CD8-positive, alpha-beta T cell (primary cell): ENCODE measurements at regions of chr6 and their contacts with region 1.

Region 1: GRCh38 chr6:89242574-89243330 is 25.6 kb upstream of the GABRR1 start:
- DNase-seq: peak in 2 of 9 experiments; percentile 40 to 53
- ATAC-seq: no peak
- H3K4me3 ChIP-seq: no peak overlapping the region
- H3K4me3 Mint-ChIP-seq: no peak overlapping the region
- H3K27ac ChIP-seq: no peak overlapping the region
- H3K27ac Mint-ChIP-seq: no peak overlapping the region
- H3K4me1 ChIP-seq: peaks cover 15% of the 10 kb centered on the region
- H3K4me1 Mint-ChIP-seq: peaks cover 20% of the 10 kb centered on the region
- H3K27me3 ChIP-seq: no peaks in the 10 kb centered on the region
- H3K27me3 Mint-ChIP-seq: peaks cover 3% of the 10 kb centered on the region
- CTCF ChIP-seq: peak; percentile 35

Region 2: DNA sequence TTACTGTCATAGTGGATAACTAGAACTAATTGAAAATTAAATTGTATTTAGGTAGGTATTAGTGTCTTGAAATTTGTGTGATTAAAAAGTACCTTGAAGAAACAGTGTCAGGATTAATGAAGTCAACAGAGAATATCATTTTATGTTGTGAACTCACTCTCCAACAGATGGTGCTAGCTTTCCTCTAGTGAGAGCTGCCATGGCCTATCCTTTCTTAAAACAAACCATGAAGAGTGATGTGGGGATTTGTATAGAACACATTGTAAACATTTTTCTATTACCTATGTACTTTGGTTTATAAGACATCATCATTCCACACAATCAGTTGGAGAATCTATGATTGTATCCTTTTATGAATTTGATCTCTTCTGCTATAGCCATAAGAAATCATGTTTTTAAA is 120.1 kb before region 1 on chr6:
- CTCF ChIA-PET with region 1: no interaction called
- POLR2A ChIA-PET with region 1: no interaction called
- intact Hi-C with region 1: loop called (anchors 1 to 5 kb)
- DNase-seq: peak in 2 of 9 experiments; percentile 34 to 49
- ATAC-seq: peak; percentile 57
- H3K4me3 ChIP-seq: no peak overlapping the region
- H3K4me3 Mint-ChIP-seq: no peak overlapping the region
- H3K27ac ChIP-seq: no peak overlapping the region
- H3K27ac Mint-ChIP-seq: no peak overlapping the region
- H3K4me1 ChIP-seq: no peaks in the 10 kb centered on the region
- H3K4me1 Mint-ChIP-seq: peaks cover 2% of the 10 kb centered on the region
- H3K27me3 ChIP-seq: no peaks in the 10 kb centered on the region
- H3K27me3 Mint-ChIP-seq: no peaks in the 10 kb centered on the region
- CTCF ChIP-seq: peak; percentile 47

Region 3: DNA sequence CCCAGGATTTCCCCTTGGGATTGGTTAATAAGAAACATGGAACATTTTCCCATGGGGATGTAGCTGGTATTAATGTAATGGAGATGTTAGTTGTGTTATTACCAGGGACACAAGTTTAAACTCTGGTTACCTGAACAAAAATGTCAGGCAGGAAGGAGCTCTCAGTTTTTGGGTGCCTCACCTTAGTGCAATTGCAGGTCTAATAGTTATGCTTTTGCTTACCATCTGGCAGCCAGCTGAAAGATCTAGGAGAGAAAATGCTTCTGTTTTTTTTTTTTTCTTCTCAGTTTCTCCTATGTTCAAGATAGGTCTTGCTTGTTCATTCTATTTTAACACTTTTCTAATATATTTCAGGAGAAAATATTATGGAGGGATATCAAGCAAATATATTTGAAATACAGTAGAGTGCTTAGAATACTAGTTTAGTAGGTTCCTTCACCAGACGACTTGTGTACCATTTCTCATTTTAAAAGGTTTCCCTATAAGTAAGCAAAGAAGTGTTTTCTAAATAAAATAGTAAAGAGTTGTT is 114.0 kb after region 1 on chr6:
- CTCF ChIA-PET with region 1: no interaction called
- POLR2A ChIA-PET with region 1: no interaction called
- intact Hi-C with region 1: no loop called
- DNase-seq: peak in 1 of 9 experiments; percentile 33
- ATAC-seq: no peak
- H3K4me3 ChIP-seq: peak overlapping the region in 1 of 2 experiments; percentile 35
- H3K4me3 Mint-ChIP-seq: peak overlapping the region; percentile 94
- H3K27ac ChIP-seq: peak overlapping the region in 1 of 2 experiments; percentile 55
- H3K27ac Mint-ChIP-seq: peak overlapping the region; percentile 95
- H3K4me1 ChIP-seq: peaks cover 28% of the 10 kb centered on the region
- H3K4me1 Mint-ChIP-seq: peaks cover 55% of the 10 kb centered on the region
- H3K27me3 ChIP-seq: no peaks in the 10 kb centered on the region
- H3K27me3 Mint-ChIP-seq: no peaks in the 10 kb centered on the region
- CTCF ChIP-seq: no peak